ENCODE measurements at regions of chr22 and their contacts with region 1.

Region 1: DNA sequence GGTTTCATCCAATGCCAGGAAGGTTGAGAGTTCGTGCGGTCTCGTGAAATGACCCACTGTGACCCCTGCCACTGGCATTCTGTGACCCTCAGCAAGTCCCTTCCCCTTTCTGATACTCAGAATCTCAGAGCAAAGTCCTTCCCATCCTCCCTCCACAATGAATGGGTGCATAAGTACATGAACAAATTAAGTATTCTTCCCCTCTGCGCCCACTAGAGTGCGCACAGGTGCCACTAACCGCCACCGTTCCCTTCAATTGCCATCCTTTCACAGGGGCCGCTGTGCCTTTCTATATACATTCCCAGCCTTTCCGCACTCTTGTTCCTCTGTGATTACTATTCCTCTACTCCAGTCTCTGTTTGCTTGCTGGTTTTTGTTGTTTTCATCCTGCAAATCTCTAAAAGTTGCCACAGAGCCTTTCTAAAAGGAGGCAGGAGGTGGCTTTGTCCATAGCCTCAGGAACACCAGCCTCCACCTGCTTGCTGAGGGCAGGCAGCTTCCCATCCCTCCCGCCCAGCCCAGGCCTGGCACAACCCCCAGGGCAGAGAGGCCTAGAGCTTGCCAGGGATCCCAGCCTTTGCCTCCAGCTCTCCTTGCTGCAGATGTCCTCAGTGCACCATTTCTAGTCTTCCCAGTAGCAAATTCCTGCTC is 6.7 kb upstream of the AP1B1 start:
- DNase-seq: peak; percentile 78
- H3K4me3 ChIP-seq: no peak overlapping the region
- H3K27ac ChIP-seq: no peak overlapping the region
- H3K4me1 ChIP-seq: peaks cover 0 to 10% (median 5%) of the 10 kb centered on the region in 4 donors
- H3K27me3 ChIP-seq: no peaks in the 10 kb centered on the region
- CTCF ChIP-seq: peak; percentile 75 to 82 (median 80)
- EP300 ChIP-seq: no peak
- POLR2A ChIP-seq: no peak

Region 2: GRCh38 chr22:29267858-29268417 is 127.1 kb before region 1 on chr22 and contains the starts of genes EWSR1 and RHBDD3:
- in situ Hi-C with region 1: no loop called
- intact Hi-C with region 1: no loop called
- DNase-seq: peak; percentile 96
- H3K4me3 ChIP-seq: peak within 1 kb of the TSS; percentile 84 to 97 (median 90)
- H3K27ac ChIP-seq: peak within 1 kb of the TSS; percentile 97 to 100 (median 100)
- H3K4me1 ChIP-seq: peaks cover 25 to 54% (median 48%) of the 10 kb centered on the region in 4 donors
- H3K27me3 ChIP-seq: no peaks in the 10 kb centered on the region
- CTCF ChIP-seq: peak in 1 of 5 experiments; percentile 8
- EP300 ChIP-seq: no peak
- POLR2A ChIP-seq: peak; percentile 88
- total RNA-seq, gene EWSR1: 196 to 318 (median 205) TPM
- total RNA-seq, gene RHBDD3: 20.9 to 131 (median 31.5) TPM

Region 3: GRCh38 chr22:29306175-29306834 is 88.8 kb before region 1 on chr22 and contains the start of gene GAS2L1:
- in situ Hi-C with region 1: no loop called
- intact Hi-C with region 1: no loop called
- DNase-seq: peak; percentile 89
- H3K4me3 ChIP-seq: peak within 1 kb of the TSS; percentile 63 to 91 (median 78)
- H3K27ac ChIP-seq: peak within 1 kb of the TSS; percentile 84 to 96 (median 90)
- H3K4me1 ChIP-seq: peaks cover 33 to 61% (median 53%) of the 10 kb centered on the region in 4 donors
- H3K27me3 ChIP-seq: no peaks in the 10 kb centered on the region
- CTCF ChIP-seq: peak; percentile 61 to 74 (median 70)
- EP300 ChIP-seq: no peak
- POLR2A ChIP-seq: no peak
- total RNA-seq, gene GAS2L1: 21.1 to 81.0 (median 43.6) TPM

Region 4: GRCh38 chr22:29524440-29525191 is 129.6 kb after region 1 on chr22:
- in situ Hi-C with region 1: loop called in 1 of 4 experiments (anchors 10 kb)
- intact Hi-C with region 1: loop called (anchors 10 kb)
- DNase-seq: peak; percentile 22
- H3K4me3 ChIP-seq: no peak overlapping the region
- H3K27ac ChIP-seq: no peak overlapping the region
- H3K4me1 ChIP-seq: no peaks in the 10 kb centered on the region
- H3K27me3 ChIP-seq: no peaks in the 10 kb centered on the region
- CTCF ChIP-seq: peak; percentile 29 to 52 (median 48)
- EP300 ChIP-seq: no peak
- POLR2A ChIP-seq: no peak